HEK293 (cell line): ENCODE measurements at regions of chr2 and their contacts with region 1.

Region 1: GRCh38 chr2:105114551-105114950 is 76.7 kb downstream of the MRPS9 start:
- H3K4me3 ChIP-seq: no peak overlapping the region
- H3K27ac ChIP-seq: no peak overlapping the region
- H3K4me1 ChIP-seq: no peaks in the 10 kb centered on the region
- CTCF ChIP-seq: 0 out of 2 replicates have a peak, but pooled peaks have one; percentile 34

Region 2: DNA sequence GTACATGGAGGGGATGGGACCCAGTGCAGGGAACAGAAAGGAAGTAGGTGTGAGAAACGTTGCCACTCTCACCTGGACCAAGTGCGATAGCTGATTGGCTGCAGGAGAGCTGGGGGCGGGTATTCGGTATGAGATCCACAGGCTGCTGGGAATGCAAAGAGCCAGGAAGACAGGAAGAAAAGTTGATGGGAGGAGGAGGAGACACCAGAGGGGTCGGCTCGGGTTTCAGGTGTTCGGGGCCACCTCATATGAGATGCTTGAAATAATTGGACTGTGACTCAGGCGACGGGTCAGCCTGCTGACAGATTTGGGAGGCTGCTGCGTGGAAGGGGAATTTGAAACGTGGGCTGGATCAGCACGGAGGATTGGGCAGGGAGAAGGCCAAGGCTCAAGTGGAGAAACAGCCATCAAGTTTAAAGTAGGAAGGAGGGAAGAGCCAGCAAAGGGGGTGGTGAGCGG is 11.6 kb before region 1 on chr2:
- CTCF ChIA-PET with region 1: interaction called, 12 read pairs
- POLR2A ChIA-PET with region 1: no interaction called
- H3K4me3 ChIP-seq: no peak overlapping the region
- H3K27ac ChIP-seq: no peak overlapping the region
- H3K4me1 ChIP-seq: no peaks in the 10 kb centered on the region
- CTCF ChIP-seq: no peak

Region 3: GRCh38 chr2:105179469-105180372 is 65.2 kb after region 1 on chr2:
- CTCF ChIA-PET with region 1: interaction called, 42 read pairs
- POLR2A ChIA-PET with region 1: no interaction called
- H3K4me3 ChIP-seq: no peak overlapping the region
- H3K27ac ChIP-seq: no peak overlapping the region
- H3K4me1 ChIP-seq: no peaks in the 10 kb centered on the region
- CTCF ChIP-seq: peak; percentile 69

Region 4: GRCh38 chr2:105294844-105295481 is 180.4 kb after region 1 on chr2:
- CTCF ChIA-PET with region 1: interaction called, 33 read pairs
- POLR2A ChIA-PET with region 1: no interaction called
- H3K4me3 ChIP-seq: no peak overlapping the region
- H3K27ac ChIP-seq: no peak overlapping the region
- H3K4me1 ChIP-seq: no peaks in the 10 kb centered on the region
- CTCF ChIP-seq: peak; percentile 60; the same call in 1 of the 2 replicates

Region 5: DNA sequence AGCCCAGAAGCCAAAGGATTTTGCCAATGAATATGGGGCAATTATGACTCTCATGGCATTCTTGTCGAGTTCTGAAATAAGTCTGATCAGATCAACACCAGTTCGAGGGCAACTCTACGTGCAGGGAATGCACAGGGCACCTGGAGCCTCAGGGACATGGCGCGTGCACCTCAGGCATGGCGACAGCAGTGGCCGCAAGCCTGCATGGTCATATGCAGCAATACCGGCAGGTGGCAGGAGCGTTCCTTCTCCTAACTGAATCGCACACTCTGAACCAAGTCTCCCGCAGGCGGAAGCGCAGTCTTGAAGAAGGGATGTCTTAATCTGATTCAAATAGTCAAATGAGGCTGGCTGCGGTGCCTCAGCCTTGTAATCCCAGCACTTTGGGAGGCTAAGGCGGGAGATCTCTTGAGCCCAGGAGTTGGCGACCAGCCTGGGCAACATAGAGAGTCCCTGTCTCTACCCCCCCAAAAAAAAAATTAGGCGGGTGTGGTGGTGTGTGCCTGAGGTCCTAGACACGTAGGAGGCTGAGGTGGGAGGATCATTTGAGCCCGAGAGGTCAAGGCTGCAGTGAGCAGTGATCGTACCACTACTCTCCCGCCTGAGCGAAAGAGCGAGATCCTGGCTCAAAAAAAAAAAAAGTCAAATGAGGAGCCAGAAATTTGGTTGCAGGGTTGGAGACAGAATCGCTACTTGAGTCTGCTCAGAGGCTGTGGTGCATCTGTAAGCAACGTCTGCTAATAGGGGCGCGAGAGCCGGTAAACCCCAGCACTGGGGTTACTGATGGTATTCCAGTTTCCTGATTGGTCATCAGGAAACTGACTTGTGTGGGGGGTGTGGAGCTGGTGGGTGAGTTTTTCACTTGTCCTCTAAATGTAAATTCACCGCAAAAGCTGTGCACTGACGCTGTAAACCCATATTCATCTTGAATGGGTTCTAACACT is 255.5 kb after region 1 on chr2:
- CTCF ChIA-PET with region 1: no interaction called
- POLR2A ChIA-PET with region 1: no interaction called
- H3K4me3 ChIP-seq: no peak overlapping the region
- H3K27ac ChIP-seq: no peak overlapping the region
- H3K4me1 ChIP-seq: no peaks in the 10 kb centered on the region
- CTCF ChIP-seq: peak; percentile 88